RWPE1 (cell line): ENCODE measurements at regions of chr11 and their contacts with region 1.

Region 1: DNA sequence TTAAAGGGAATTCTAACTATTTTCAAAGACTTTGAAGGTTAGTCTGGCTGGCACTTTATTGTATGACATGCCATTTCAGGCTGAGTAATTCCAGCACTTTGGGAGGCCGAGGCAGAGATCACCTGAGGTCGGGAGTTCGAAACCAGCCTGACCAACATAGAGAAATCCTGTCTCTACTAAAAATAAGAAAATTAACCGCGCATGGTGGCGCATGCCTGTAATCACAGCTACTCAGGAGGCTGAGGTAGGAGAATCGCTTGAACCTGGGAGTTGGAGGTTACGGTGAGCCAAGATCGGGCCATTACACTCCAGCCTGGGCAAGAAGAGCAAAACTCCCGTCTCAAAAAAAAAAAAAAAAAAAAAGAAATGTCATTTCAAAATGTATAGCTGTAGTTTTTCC is 95.6 kb downstream of the RDX start:
- DNase-seq: no peak
- H3K27ac ChIP-seq: no peak overlapping the region
- CTCF ChIP-seq: no peak

Region 2: GRCh38 chr11:110086892-110087309 is 113.9 kb before region 1 on chr11:
- CTCF ChIA-PET with region 1: no interaction called
- POLR2A ChIA-PET with region 1: no interaction called
- DNase-seq: peak; percentile 50
- H3K27ac ChIP-seq: no peak overlapping the region
- CTCF ChIP-seq: no peak

Region 3: DNA sequence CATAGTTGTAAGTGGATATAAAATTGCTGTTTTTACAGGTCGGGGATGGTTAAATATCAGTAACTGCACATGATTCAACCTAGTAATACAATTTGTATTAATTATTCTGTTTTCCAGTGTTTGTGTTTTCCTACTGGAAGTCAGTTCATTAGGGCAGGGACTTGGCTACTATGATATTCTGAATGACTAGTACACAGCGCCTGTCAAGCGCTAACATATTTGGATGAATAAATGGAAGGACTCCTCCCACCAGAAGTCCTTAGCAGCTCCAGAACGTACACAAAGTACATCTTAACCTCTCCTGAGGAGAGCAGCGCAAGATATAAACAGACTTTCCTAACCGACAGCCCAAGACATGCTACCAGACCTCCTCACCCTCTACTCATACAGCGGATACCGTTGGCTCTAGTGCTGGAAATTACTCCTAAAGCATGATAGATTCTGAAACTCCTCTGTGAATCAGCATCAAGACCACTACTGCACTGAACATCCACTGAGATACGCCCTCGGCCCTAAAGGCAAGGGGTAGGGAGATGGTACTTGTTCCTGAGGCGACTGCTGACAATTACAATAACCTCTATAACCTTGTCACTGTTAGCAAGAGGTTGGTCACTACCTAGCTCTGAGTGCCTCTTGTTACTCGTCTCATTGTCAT is 16.5 kb after region 1 on chr11:
- CTCF ChIA-PET with region 1: interaction called, 11 read pairs
- POLR2A ChIA-PET with region 1: no interaction called
- DNase-seq: no peak
- H3K27ac ChIP-seq: no peak overlapping the region
- CTCF ChIP-seq: no peak